ENCODE measurements at regions of chr7 and their contacts with region 1.

Region 1: GRCh38 chr7:37092548-37092947 is 356.1 kb downstream of the ELMO1 start:
- DNase-seq: peak in 2 of 5 donors; percentile 23 to 25
- H3K4me3 ChIP-seq: no peak overlapping the region
- H3K27ac ChIP-seq: no peak overlapping the region
- H3K4me1 ChIP-seq: peaks cover 5% of the 10 kb centered on the region
- H3K27me3 ChIP-seq: no peaks in the 10 kb centered on the region
- CTCF ChIP-seq: no peak
- EP300 ChIP-seq: no peak
- POLR2A ChIP-seq: no peak

Region 2: GRCh38 chr7:36473454-36474282 is 618.9 kb before region 1 on chr7:
- intact Hi-C with region 1: no loop called
- DNase-seq: peak in 1 of 5 donors; percentile 38
- H3K4me3 ChIP-seq: no peak overlapping the region
- H3K27ac ChIP-seq: no peak overlapping the region
- H3K4me1 ChIP-seq: no peaks in the 10 kb centered on the region
- H3K27me3 ChIP-seq: no peaks in the 10 kb centered on the region
- CTCF ChIP-seq: no peak
- EP300 ChIP-seq: no peak
- POLR2A ChIP-seq: no peak

Region 3: GRCh38 chr7:37045681-37046179 is 46.8 kb before region 1 on chr7:
- intact Hi-C with region 1: loop called in 1 of 4 experiments (anchors 1 kb)
- DNase-seq: no peak
- H3K4me3 ChIP-seq: no peak overlapping the region
- H3K27ac ChIP-seq: no peak overlapping the region
- H3K4me1 ChIP-seq: no peaks in the 10 kb centered on the region
- H3K27me3 ChIP-seq: no peaks in the 10 kb centered on the region
- CTCF ChIP-seq: no peak
- EP300 ChIP-seq: no peak
- POLR2A ChIP-seq: no peak

Measured in ovary (tissue), 10 donors.